Dorsolateral prefrontal cortex (tissue), 120 donors: ENCODE measurements at regions of chr13 and their contacts with region 1.

Region 1: GRCh38 chr13:48037346-48038173 is at the start of gene NUDT15:
- DNase-seq: peak; percentile 83 to 96 (median 93)
- H3K4me3 ChIP-seq: peak within 1 kb of the TSS; percentile 64 to 97 (median 81)
- H3K27ac ChIP-seq: peak within 1 kb of the TSS; percentile 89 to 100 (median 98)
- H3K27me3 ChIP-seq: no peaks in the 10 kb centered on the region
- CTCF ChIP-seq: peak; percentile 74 to 98 (median 92)
- total RNA-seq, gene NUDT15: 4.3 to 11.9 (median 6.7) TPM

Region 2: DNA sequence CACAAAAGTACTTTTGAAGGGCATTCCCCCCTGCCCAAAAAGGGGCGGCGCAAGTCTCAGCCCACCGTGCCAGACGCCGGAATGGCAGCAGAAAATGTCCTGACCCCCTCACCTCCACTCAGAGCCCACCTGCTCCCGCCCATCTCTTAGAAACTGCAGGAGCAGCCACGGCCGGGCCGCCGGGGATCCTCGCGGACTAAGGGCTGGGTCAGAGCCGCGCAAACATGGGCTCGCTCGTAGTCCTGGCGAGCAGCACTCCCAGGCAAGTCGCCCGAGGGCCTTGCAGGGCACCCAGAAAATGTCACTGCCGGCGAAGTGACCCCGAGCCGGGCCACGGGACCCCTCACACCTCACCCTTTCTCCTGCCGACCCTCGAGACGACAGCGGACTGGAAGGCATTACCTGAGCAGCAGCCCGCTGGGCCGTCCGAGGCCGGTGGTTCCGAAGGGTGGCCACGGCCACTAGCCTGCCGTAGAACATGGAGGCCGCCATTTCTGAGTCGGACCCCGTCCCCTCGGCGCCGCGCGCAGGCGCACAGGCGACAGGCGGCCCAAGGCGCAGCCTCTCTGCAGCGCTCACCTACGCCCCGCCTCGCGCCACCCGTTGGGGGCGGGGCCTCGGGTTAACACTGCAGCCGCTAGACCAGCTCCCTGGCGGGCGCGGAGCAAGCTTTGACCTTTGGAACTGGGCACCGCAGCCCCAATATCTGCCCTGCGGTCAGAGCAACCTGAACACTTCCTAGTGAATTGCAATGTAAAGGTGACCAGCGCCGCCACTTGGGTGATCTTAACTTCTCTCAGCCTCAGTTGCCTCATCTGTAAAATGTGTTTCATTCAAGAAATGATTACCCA is 36.6 kb before region 1 on chr13 and contains the start of gene SUCLA2:
- intact Hi-C with region 1: loop called (anchors 1 to 2 kb)
- DNase-seq: peak; percentile 76 to 97 (median 86)
- H3K4me3 ChIP-seq: peak within 1 kb of the TSS; percentile 62 to 100 (median 97)
- H3K27ac ChIP-seq: peak within 1 kb of the TSS in 57 of 59 donors; percentile 6 to 95 (median 80)
- H3K27me3 ChIP-seq: no peaks in the 10 kb centered on the region
- CTCF ChIP-seq: peak in 39 of 56 donors; percentile 11 to 58 (median 32)
- total RNA-seq, gene SUCLA2: 33.6 to 119 (median 82.7) TPM

Region 3: DNA sequence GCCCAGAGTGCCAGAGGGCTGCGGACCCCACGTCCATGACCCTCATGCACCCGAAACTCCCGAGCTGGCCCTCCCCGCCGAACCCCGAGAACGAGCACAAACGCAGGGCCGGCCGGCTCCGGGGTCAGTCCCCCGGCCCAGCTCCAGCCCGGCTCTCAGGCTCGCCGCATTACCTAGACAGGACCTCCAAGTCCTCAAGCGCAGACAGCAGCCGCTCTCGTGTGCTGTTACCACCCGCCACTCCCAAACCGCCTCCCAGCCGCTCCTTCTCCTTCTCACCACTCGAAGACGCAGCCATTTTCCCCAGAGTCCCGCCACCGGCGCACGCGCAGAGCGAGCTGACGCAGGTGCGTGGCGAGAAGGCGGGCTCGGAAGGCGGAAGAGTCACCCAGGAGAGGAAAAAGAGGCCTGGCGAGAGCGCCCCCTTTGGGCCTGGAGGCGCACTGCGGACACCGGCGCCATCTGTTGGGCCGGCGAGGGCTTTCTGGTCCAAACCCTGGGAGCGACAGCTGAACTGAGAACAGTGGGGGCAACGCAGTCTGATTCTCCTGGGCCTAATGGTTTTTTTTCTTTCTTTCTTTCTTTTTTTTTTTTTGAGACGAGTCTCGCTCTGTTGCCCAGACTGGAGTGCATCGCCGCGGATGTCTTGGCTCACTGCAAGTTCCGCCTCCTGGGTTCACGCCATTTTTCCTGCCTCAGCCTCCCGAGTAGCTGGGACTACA is 57.4 kb after region 1 on chr13 and contains the start of gene MED4:
- intact Hi-C with region 1: loop called (anchors 1 to 5 kb)
- DNase-seq: peak; percentile 88 to 98 (median 92)
- H3K4me3 ChIP-seq: peak within 1 kb of the TSS; percentile 57 to 100 (median 97)
- H3K27ac ChIP-seq: peak within 1 kb of the TSS in 57 of 59 donors; percentile 5 to 96 (median 80)
- H3K27me3 ChIP-seq: no peaks in the 10 kb centered on the region
- CTCF ChIP-seq: peak in 55 of 56 donors; percentile 99 to 100 (median 100)
- total RNA-seq, gene MED4: 25.6 to 57.8 (median 42.3) TPM

Region 4: GRCh38 chr13:48110931-48111721 is 73.6 kb after region 1 on chr13:
- intact Hi-C with region 1: no loop called
- DNase-seq: peak in 1 of 10 donors; percentile 33
- H3K4me3 ChIP-seq: no peak overlapping the region
- H3K27ac ChIP-seq: peak overlapping the region in 32 of 59 donors; percentile 0 to 80 (median 30)
- H3K27me3 ChIP-seq: no peaks in the 10 kb centered on the region
- CTCF ChIP-seq: no peak